ENCODE measurements at regions of chr10 and their contacts with region 1.

Region 1: GRCh38 chr10:124043310-124044142 is 49.9 kb downstream of the CHST15 start:
- DNase-seq: no peak
- H3K4me3 ChIP-seq: no peak overlapping the region
- H3K27ac ChIP-seq: no peak overlapping the region
- H3K4me1 ChIP-seq: peaks cover 6% of the 10 kb centered on the region
- H3K27me3 ChIP-seq: no peaks in the 10 kb centered on the region
- CTCF ChIP-seq: no peak
- EP300 ChIP-seq: no peak
- POLR2A ChIP-seq: no peak

Region 2: GRCh38 chr10:124005991-124006392 is 37.5 kb before region 1 on chr10:
- intact Hi-C with region 1: loop called in 1 of 4 experiments (anchors 5 kb)
- DNase-seq: peak in 3 of 5 donors; percentile 17 to 25 (median 24)
- H3K4me3 ChIP-seq: no peak overlapping the region
- H3K27ac ChIP-seq: no peak overlapping the region
- H3K4me1 ChIP-seq: peaks cover 9% of the 10 kb centered on the region
- H3K27me3 ChIP-seq: no peaks in the 10 kb centered on the region
- CTCF ChIP-seq: no peak
- EP300 ChIP-seq: no peak
- POLR2A ChIP-seq: no peak

Region 3: DNA sequence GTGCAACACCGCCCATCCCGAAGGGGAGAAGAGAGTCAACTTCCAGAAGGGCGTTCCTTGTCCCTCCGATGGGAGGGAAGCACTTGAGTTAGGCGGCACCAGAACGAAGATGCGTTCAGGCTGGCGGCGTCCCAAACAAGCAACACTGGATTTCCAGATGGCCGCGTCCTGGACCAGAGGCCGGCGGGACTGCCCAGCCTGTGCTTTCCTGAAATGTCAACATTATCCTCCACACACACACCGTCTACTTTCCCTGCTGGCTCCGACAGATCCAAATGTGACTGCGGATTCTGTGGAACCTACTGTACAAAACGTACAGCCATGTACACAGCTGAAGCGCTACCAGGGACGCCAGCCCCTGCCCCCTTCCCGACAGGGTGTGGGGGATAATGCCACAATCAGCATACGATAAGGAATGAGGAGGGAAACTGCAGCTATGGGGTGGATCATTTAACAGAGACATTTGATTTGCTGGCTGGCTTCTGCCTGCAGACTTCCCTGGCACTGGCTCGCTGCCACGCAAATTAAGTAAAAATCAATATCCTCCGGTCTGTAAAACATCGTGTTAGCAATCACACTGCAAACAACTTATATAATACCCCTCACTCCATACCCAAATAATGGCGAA is 980.5 kb after region 1 on chr10:
- intact Hi-C with region 1: no loop called
- DNase-seq: peak; percentile 78 to 94 (median 81)
- H3K4me3 ChIP-seq: no peak overlapping the region
- H3K27ac ChIP-seq: no peak overlapping the region
- H3K4me1 ChIP-seq: peaks cover 31% of the 10 kb centered on the region
- H3K27me3 ChIP-seq: no peaks in the 10 kb centered on the region
- CTCF ChIP-seq: no peak
- EP300 ChIP-seq: no peak
- POLR2A ChIP-seq: no peak